ENCODE measurements at regions of chr4 and their contacts with region 1.

Region 1: DNA sequence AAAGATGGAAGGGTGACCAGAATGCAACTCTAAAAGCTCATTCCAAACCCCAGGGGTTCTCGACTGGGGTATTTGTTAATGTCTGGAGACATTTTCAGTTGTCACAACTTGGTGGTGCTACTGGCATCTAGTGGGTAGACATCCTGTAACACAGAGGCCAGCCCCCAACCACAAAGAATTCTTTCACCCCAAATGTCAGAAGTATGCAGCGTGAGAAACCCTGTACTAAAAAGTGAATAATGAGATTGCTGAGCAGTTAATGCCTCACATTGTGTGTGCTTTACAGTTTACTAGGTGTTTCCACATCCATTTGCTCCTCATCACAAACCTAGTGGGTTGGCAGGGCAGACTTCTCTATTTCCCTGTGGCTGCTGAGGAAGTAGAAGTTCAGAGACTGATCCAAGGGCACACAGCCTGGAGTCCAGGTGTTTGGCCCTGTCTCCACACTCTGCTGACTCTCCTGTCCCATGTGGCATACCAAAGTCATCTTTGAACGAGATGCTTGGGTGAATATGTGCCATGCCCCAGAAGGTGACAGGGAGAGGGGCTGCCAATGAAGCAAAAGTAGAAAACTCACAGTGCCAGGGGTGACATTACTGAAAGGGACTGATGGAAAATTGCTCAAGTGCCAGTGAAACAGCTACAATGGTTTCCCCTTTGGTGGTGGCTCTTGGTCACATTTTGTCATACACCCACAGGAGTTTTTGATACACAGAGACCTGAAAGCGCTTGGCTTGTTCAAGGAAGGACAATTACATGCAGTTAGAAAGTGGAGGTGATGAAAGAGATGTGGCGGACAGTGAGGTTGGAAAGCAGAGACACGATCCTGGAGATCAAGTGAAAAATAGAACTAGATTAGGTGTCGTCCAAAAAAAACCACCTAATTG is 10.1 kb upstream of the TMEM154 start:
- DNase-seq: no peak
- ATAC-seq: no peak
- H3K4me3 ChIP-seq: no peak overlapping the region
- H3K27ac ChIP-seq: no peak overlapping the region
- H3K4me1 ChIP-seq: no peaks in the 10 kb centered on the region; a peak in 1 of 5 replicates
- H3K27me3 ChIP-seq: peaks cover 2 to 22% of the 10 kb centered on the region in 2 experiments; a peak in 3 of 5 replicates
- CTCF ChIP-seq: no peak
- EP300 ChIP-seq: no peak
- POLR2A ChIP-seq: no peak
- RAD21 ChIP-seq: no peak

Region 2: DNA sequence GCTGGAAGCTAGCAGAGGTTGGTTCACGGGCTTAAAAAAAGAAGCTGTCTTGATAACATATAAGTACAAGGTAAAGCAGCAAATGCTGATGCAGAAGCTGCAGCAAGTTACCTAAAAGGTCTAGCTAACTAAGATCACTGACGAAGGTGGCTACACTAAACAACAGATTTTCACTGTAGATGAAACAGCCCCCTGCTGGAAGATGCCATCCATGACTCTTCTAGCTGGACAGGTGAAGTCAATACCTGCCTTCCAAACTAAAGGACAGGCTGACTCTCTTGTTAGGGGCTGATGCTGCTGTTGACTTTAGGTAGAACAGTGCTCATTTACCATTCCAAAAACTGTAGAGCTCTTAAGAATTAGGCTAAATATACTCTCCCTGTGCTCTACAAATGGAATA is 253.5 kb before region 1 on chr4:
- CTCF ChIA-PET with region 1: no interaction called
- POLR2A ChIA-PET with region 1: no interaction called
- in situ Hi-C with region 1: no loop called
- intact Hi-C with region 1: no loop called
- DNase-seq: no peak
- ATAC-seq: no peak
- H3K4me3 ChIP-seq: no peak overlapping the region
- H3K27ac ChIP-seq: no peak overlapping the region
- H3K4me1 ChIP-seq: no peaks in the 10 kb centered on the region
- H3K27me3 ChIP-seq: no peaks in the 10 kb centered on the region
- CTCF ChIP-seq: 0 out of 6 replicates have a peak, but pooled peaks of 1 of the 3 experiments have one; percentile 11
- EP300 ChIP-seq: no peak
- POLR2A ChIP-seq: no peak
- RAD21 ChIP-seq: no peak

Region 3: GRCh38 chr4:152719801-152720556 is 30.1 kb after region 1 on chr4:
- CTCF ChIA-PET with region 1: no interaction called
- POLR2A ChIA-PET with region 1: no interaction called
- in situ Hi-C with region 1: loop called (anchors 5 kb)
- intact Hi-C with region 1: no loop called
- DNase-seq: no peak
- ATAC-seq: peak; percentile 51; the same call in 1 of the 3 replicates
- H3K4me3 ChIP-seq: no peak overlapping the region
- H3K27ac ChIP-seq: no peak overlapping the region
- H3K4me1 ChIP-seq: no peaks in the 10 kb centered on the region
- H3K27me3 ChIP-seq: peaks cover 0 to 4% of the 10 kb centered on the region in 2 experiments; a peak in 3 of 5 replicates
- CTCF ChIP-seq: no peak
- EP300 ChIP-seq: no peak
- POLR2A ChIP-seq: no peak
- RAD21 ChIP-seq: no peak